ENCODE measurements at regions of chr2 and their contacts with region 1.

Region 1: DNA sequence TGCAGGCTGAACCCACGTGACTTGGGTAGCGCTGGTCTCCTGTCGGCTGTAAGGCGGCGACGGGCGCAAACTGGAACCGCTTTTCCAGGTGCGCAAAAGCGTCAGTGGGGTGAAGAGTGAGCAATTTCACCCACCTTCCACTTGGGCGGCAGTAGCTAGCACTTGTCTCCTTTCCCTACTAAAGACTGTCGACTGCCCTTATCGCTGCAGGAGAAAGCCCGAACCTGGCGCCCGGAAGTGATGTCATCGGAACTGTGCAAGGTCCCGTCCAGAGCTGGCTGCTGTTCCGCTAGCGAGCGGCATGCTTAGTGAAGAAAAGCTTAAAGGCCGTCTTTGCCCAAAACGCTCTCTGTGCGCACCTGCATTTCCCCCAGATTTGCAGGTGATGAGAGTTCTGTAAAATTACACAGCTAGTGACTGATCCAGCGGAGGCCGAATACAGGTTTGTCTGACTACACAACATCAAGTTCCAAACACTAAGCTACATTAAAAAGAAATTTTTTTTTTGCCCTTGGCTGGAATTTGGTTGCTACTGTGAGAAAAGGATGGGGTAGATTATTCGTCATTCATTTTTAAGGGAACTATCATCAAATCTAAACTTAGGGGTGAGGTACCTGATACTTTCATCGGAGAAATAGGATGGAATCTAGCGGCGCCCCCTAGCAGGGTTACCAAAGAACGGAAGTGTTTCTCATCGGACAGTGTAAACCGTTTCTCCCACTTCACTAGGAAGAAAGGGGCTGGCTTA is at the start of gene OSGEPL1:
- DNase-seq: peak; percentile 97
- H3K4me3 Mint-ChIP-seq: peak within 1 kb of the TSS; percentile 85
- H3K27ac Mint-ChIP-seq: peak within 1 kb of the TSS; percentile 97
- H3K4me1 Mint-ChIP-seq: peaks cover 20% of the 10 kb centered on the region
- H3K27me3 Mint-ChIP-seq: no peaks in the 10 kb centered on the region

Region 2: DNA sequence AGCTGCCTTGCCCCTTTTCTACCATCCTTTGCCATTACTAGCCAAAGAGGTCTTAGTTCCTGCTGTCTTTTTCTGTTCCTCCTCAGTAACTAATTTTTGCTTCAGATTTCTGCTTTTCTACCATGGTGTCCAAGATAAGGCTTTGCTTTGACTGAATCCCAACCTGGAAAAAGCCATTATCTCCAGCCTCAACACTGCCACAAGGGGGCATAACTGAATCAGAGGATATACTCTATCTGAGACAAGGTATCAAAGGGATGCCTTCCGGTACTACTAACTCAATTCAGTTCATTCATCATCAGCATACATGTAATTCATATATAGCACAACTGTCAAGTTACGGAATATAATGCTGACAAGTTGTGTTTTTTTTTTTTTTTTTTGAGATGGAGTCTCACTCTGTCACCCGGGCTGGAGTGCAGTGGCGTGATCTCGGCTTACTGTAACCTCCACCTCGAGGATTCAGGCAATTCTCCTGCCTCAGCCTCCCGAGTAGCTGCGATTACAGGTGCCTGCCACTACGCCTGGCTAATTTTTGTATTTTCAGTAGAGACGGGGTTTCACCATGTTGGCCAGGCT is 11.6 kb before region 1 on chr2:
- CTCF ChIA-PET with region 1: interaction called, 16 read pairs
- DNase-seq: peak; percentile 60
- H3K4me3 Mint-ChIP-seq: no peak overlapping the region
- H3K27ac Mint-ChIP-seq: no peak overlapping the region
- H3K4me1 Mint-ChIP-seq: no peaks in the 10 kb centered on the region
- H3K27me3 Mint-ChIP-seq: no peaks in the 10 kb centered on the region

Region 3: GRCh38 chr2:190121971-190122370 is 359.2 kb after region 1 on chr2:
- CTCF ChIA-PET with region 1: no interaction called
- DNase-seq: no peak
- H3K4me3 Mint-ChIP-seq: no peak overlapping the region
- H3K27ac Mint-ChIP-seq: no peak overlapping the region
- H3K4me1 Mint-ChIP-seq: peaks cover 2% of the 10 kb centered on the region
- H3K27me3 Mint-ChIP-seq: no peaks in the 10 kb centered on the region